CD4-positive, alpha-beta memory T cell (primary cell): ENCODE measurements at regions of chr16 and their contacts with region 1.

Region 1: GRCh38 chr16:70289229-70290098 is at the start of gene AARS1:
- DNase-seq: peak; percentile 95 to 97 (median 96)
- H3K4me3 ChIP-seq: peak within 1 kb of the TSS; percentile 49 to 76
- H3K4me3 Mint-ChIP-seq: peak within 1 kb of the TSS; percentile 96 to 99 (median 98)
- H3K27ac ChIP-seq: peak within 1 kb of the TSS; percentile 87
- H3K27ac Mint-ChIP-seq: peak within 1 kb of the TSS; percentile 90 to 99 (median 98)
- H3K4me1 ChIP-seq: peaks cover 10% of the 10 kb centered on the region
- H3K4me1 Mint-ChIP-seq: peaks cover 7 to 27% (median 20%) of the 10 kb centered on the region in 4 donors
- H3K27me3 ChIP-seq: no peaks in the 10 kb centered on the region
- H3K27me3 Mint-ChIP-seq: no peaks in the 10 kb centered on the region
- total RNA-seq, gene AARS1: 102 to 103 TPM

Region 2: DNA sequence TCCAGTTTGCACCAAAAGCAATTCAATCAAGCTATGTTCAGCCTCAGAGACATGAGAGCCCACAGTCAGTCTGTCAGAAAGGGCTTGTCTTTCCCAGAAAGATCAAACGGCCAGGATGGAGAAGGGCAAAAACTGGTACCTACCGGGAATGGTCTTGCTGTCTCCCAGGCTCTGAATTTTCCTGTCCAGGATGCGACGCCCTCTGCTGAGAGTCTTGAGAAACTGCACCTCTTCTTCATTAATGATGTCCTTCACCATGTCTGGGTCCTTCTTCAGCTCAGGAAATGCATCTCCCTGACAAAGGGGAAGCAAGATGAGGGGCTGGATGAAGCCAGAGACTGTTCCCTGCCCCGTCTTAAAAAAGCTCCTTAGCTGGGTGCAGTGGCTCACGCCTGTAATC is 21.9 kb before region 1 on chr16:
- CTCF ChIA-PET with region 1: interaction called, 5 read pairs
- POLR2A ChIA-PET with region 1: interaction called, 13 read pairs
- intact Hi-C with region 1: no loop called
- DNase-seq: peak in 3 of 5 donors; percentile 26 to 31 (median 29)
- H3K4me3 ChIP-seq: no peak overlapping the region
- H3K4me3 Mint-ChIP-seq: no peak overlapping the region
- H3K27ac ChIP-seq: no peak overlapping the region
- H3K27ac Mint-ChIP-seq: peak overlapping the region in 1 of 7 donors; percentile 72
- H3K4me1 ChIP-seq: no peaks in the 10 kb centered on the region
- H3K4me1 Mint-ChIP-seq: peaks cover 0 to 1% (median 0%) of the 10 kb centered on the region in 4 donors
- H3K27me3 ChIP-seq: no peaks in the 10 kb centered on the region
- H3K27me3 Mint-ChIP-seq: no peaks in the 10 kb centered on the region

Region 3: DNA sequence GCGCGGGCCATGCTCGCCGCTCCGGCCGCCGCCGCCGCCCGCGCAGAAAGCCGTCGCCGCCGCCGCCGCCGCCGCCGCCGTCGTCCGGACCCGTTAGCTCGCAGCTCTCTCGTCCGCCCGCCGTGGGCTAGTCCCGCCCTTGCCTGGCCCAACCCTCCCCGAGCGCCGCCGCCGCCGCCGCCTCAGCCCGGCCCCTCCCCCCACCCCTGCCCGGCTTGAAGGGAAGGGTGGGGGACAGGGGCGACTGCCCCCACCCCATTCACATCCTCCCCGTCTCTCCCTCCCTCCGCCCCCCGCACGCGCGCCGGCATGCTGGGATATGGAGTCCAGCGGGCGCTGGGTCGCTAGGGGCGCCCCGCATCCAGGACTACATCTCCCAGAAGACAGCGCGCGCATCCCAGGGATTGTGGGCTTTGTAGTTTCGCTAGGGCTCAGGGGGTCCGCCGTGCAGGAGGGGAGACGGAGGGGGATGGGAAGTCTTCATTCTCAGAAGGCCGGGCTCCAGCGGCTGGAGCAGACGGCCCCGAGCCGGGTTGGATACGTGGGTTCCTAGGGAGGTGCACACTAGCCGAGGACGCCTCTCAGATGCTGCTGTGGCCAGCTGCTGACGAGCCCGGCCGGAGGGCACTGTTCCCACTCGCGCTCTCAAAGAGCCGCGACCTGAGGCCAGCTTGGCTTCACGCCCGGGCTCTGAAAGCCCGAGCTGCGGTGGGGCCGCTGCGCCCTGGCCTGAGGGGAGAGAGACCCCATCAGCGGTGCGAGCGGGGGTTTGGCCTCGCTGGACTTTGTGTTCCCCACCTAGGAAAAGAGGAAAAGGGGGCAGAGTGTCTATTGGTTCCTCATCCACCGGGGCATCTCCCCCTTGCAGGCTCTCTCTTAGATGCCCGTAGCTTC is 149.8 kb after region 1 on chr16 and contains the start of gene ST3GAL2:
- CTCF ChIA-PET with region 1: no interaction called
- POLR2A ChIA-PET with region 1: no interaction called
- intact Hi-C with region 1: no loop called
- DNase-seq: peak; percentile 90 to 94 (median 91)
- H3K4me3 ChIP-seq: peak within 1 kb of the TSS; percentile 67 to 95
- H3K4me3 Mint-ChIP-seq: peak within 1 kb of the TSS; percentile 93 to 99 (median 96)
- H3K27ac ChIP-seq: peak within 1 kb of the TSS; percentile 64
- H3K27ac Mint-ChIP-seq: peak within 1 kb of the TSS; percentile 86 to 97 (median 94)
- H3K4me1 ChIP-seq: peaks cover 35% of the 10 kb centered on the region
- H3K4me1 Mint-ChIP-seq: peaks cover 17 to 49% (median 35%) of the 10 kb centered on the region in 4 donors
- H3K27me3 ChIP-seq: no peaks in the 10 kb centered on the region
- H3K27me3 Mint-ChIP-seq: no peaks in the 10 kb centered on the region
- total RNA-seq, gene ST3GAL2: 27.5 to 30.8 TPM